ENCODE measurements at regions of chr11 and their contacts with region 1.

Region 1: DNA sequence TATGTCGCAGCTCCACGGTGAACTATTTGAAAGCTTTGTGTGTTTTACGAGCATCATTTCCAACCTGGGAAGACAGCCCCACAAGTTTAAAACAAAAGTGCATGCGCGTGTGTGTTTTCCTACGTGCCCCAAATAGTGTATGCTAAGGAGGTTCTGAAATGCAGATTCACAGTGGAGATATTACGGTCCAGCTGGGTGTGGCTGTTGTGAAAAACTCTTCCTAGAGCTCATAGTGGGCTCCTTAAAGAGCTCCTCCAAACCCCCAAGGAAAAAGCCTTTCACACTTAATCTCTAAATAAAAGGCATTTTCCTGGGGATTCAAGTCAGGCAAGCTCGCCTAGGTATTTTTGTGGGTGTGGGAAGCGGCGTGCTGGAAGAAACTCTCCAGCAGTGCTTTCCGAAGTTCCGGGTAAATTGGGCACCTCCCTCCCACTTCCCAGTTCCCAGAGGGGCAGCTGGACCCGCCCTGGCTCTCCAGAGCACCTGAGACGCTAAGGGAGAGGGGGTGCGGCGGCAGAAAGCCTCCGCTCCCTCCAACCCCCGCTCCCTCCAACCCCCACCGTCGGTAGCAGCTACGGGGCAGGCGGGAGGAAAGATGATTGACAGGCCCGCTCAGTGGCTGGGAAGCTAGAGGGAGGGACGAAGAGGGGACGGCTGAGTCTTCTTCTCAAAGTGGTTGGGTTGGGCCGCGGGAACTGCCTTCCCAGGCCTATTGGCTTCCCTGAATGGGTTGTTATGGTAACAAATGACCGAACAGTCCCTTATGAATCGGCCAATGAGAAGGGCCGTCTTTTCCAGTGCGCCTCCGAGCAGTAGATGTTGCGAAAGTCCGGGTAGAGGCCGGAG is 558 bp upstream of the PCF11 start:
- DNase-seq: peak; percentile 99
- H3K4me3 ChIP-seq: peak overlapping the region; percentile 41 to 61 (median 53)
- H3K27ac ChIP-seq: peak overlapping the region; percentile 53 to 86 (median 83)
- H3K4me1 ChIP-seq: peaks cover 16 to 17% of the 10 kb centered on the region in 2 donors
- H3K27me3 ChIP-seq: no peaks in the 10 kb centered on the region
- CTCF ChIP-seq: no peak
- POLR2A ChIP-seq: peak; percentile 54 to 64

Region 2: GRCh38 chr11:83071567-83072349 is 84.6 kb before region 1 on chr11 and contains the start of gene RAB30:
- intact Hi-C with region 1: loop called (anchors 10 kb)
- DNase-seq: peak; percentile 98
- H3K4me3 ChIP-seq: peak within 1 kb of the TSS; percentile 38 to 66 (median 56)
- H3K27ac ChIP-seq: peak within 1 kb of the TSS; percentile 71 to 94 (median 93)
- H3K4me1 ChIP-seq: peaks cover 29 to 38% of the 10 kb centered on the region in 2 donors
- H3K27me3 ChIP-seq: no peaks in the 10 kb centered on the region
- CTCF ChIP-seq: no peak
- POLR2A ChIP-seq: peak; percentile 86 to 99
- total RNA-seq, gene RAB30: 12.0 to 30.0 (median 22.8) TPM

Region 3: GRCh38 chr11:83193315-83194280 is 37.2 kb after region 1 on chr11 and contains the start of gene ANKRD42:
- intact Hi-C with region 1: loop called (anchors 5 kb)
- DNase-seq: peak; percentile 93 to 94
- H3K4me3 ChIP-seq: peak within 1 kb of the TSS; percentile 82 to 95 (median 84)
- H3K27ac ChIP-seq: peak within 1 kb of the TSS; percentile 68 to 89 (median 88)
- H3K4me1 ChIP-seq: peaks cover 32 to 35% of the 10 kb centered on the region in 2 donors
- H3K27me3 ChIP-seq: no peaks in the 10 kb centered on the region
- CTCF ChIP-seq: peak in 2 of 6 experiments; percentile 16 to 23
- POLR2A ChIP-seq: peak; percentile 14 to 87
- total RNA-seq, gene ANKRD42: 25.8 to 31.3 (median 30.1) TPM

Measured in thyroid gland (tissue), 4 donors.